ENCODE measurements at regions of chr20 and their contacts with region 1.

Region 1: DNA sequence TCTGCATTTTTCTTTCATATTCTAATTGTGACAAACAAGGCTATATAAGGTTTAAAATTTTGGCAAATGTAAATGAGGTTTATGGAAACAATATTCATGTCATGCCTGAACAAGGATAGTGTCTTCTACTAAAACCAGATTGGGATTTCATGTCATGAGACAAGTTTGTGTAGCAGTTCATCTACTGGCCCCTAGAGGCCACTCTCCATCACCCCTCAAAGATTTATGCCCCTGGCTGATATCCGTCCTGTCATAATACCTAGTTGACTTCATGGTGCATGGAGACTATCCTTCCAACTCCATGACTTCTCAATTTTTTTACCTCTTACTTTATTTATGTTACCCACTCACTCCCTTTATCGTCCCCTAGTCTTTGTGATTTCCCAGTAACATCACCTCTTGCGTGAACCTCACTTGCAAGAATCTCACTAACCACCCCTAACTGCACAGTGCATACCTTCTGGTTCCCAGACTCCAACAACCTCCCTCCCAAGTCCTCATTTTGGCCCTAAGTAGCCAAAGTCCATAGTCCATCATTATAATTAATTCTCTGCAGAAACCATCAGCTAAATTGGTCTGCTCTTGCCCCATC is 179.8 kb downstream of the TASP1 start:
- DNase-seq: peak; percentile 61
- ATAC-seq: peak; percentile 89
- H3K4me3 ChIP-seq: no peak overlapping the region
- H3K27ac ChIP-seq: no peak overlapping the region
- H3K4me1 ChIP-seq: peaks cover 19% of the 10 kb centered on the region
- H3K27me3 ChIP-seq: no peaks in the 10 kb centered on the region
- CTCF ChIP-seq: peak; percentile 76
- EP300 ChIP-seq: no peak
- POLR2A ChIP-seq: no peak
- RAD21 ChIP-seq: peak; percentile 65

Region 2: DNA sequence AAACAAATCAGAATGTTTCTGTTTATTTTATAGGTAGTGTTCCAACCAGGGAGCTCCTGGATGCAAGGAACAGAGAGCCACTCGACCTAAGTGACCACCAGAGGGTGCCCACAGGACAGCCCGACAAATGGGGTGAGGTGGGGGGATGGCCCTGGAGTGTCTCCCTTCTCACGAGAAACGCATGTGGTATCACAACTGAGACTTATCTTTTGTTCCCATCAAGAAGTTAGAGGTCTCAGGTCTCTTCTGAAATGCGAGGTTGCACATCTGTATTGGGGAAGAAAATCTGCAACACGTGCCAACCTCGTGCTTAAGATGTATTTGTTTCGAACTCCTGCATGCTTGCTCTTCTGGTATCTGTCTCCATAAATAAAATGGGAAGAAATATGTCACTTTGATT is 133.9 kb before region 1 on chr20:
- CTCF ChIA-PET with region 1: interaction called, 6 read pairs
- POLR2A ChIA-PET with region 1: no interaction called
- in situ Hi-C with region 1: no loop called
- intact Hi-C with region 1: loop called (anchors 1 kb)
- DNase-seq: peak; percentile 74
- ATAC-seq: peak; percentile 99
- H3K4me3 ChIP-seq: no peak overlapping the region
- H3K27ac ChIP-seq: no peak overlapping the region
- H3K4me1 ChIP-seq: peaks cover 29% of the 10 kb centered on the region
- H3K27me3 ChIP-seq: no peaks in the 10 kb centered on the region
- CTCF ChIP-seq: peak; percentile 98
- EP300 ChIP-seq: no peak
- POLR2A ChIP-seq: no peak
- RAD21 ChIP-seq: peak; percentile 99

Region 3: DNA sequence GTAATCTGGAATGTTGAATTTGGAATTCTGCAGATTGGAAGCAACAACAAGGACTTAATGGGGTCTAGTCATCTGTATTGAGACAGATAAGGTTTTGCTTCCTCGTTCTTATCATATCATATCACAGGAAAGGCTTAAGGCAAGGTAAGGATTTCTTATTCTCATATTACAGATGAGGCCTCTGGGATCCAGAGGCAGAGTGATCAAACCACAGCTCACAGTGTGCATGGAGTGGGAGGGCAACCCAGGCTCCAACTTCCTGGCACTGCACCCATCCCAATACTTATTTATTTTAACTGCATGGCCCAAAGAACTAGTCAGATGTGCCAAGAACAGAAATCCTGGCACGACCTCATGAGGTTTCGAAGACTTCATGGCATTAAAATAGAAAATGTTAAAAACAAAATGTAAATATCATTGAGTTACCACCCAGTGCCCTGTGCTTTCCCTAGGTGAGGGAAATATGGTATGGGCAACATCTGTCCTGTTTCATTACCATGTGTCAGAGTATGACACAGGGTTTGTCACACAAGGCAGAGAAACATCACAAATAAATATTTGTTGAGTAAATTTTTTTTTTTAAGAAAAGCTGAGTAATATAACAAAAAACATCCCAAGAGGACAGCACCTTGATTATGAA is 46.0 kb before region 1 on chr20:
- CTCF ChIA-PET with region 1: no interaction called
- POLR2A ChIA-PET with region 1: no interaction called
- in situ Hi-C with region 1: no loop called
- intact Hi-C with region 1: no loop called
- DNase-seq: no peak
- ATAC-seq: no peak
- H3K4me3 ChIP-seq: no peak overlapping the region
- H3K27ac ChIP-seq: no peak overlapping the region
- H3K4me1 ChIP-seq: peaks cover 25% of the 10 kb centered on the region
- H3K27me3 ChIP-seq: no peaks in the 10 kb centered on the region
- CTCF ChIP-seq: no peak
- EP300 ChIP-seq: no peak
- POLR2A ChIP-seq: no peak
- RAD21 ChIP-seq: no peak

Region 4: GRCh38 chr20:13425381-13426135 is 33.4 kb before region 1 on chr20:
- CTCF ChIA-PET with region 1: no interaction called
- POLR2A ChIA-PET with region 1: no interaction called
- in situ Hi-C with region 1: no loop called
- intact Hi-C with region 1: loop called (anchors 5 kb)
- DNase-seq: no peak
- ATAC-seq: no peak
- H3K4me3 ChIP-seq: no peak overlapping the region
- H3K27ac ChIP-seq: peak overlapping the region; percentile 82
- H3K4me1 ChIP-seq: peaks cover 66% of the 10 kb centered on the region
- H3K27me3 ChIP-seq: no peaks in the 10 kb centered on the region
- CTCF ChIP-seq: no peak
- EP300 ChIP-seq: no peak
- POLR2A ChIP-seq: no peak
- RAD21 ChIP-seq: no peak

Region 5: DNA sequence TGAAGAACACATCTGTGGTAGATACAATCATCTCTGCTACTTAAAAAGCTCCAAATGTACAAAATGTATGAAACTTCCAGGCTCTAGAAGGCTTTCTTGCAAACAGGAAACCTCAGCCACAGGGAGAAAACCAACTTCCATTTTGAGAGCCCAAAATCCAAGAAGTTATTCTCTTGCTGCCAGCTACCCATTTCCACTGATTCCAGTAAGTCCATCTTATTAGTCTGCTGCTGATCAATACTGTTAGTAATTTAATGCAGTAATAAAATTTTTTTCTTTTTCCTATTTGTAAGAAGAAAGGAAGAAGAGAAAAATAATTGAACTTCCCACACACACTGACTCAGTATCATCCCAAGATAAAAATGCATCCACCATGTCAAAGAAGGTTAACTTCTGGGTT is 10.3 kb after region 1 on chr20:
- CTCF ChIA-PET with region 1: no interaction called
- POLR2A ChIA-PET with region 1: no interaction called
- in situ Hi-C with region 1: no loop called
- intact Hi-C with region 1: no loop called
- DNase-seq: no peak
- ATAC-seq: no peak
- H3K4me3 ChIP-seq: no peak overlapping the region
- H3K27ac ChIP-seq: no peak overlapping the region
- H3K4me1 ChIP-seq: no peaks in the 10 kb centered on the region
- H3K27me3 ChIP-seq: no peaks in the 10 kb centered on the region; a peak in 1 of 5 replicates
- CTCF ChIP-seq: no peak
- EP300 ChIP-seq: no peak
- POLR2A ChIP-seq: no peak
- RAD21 ChIP-seq: no peak

Region 6: DNA sequence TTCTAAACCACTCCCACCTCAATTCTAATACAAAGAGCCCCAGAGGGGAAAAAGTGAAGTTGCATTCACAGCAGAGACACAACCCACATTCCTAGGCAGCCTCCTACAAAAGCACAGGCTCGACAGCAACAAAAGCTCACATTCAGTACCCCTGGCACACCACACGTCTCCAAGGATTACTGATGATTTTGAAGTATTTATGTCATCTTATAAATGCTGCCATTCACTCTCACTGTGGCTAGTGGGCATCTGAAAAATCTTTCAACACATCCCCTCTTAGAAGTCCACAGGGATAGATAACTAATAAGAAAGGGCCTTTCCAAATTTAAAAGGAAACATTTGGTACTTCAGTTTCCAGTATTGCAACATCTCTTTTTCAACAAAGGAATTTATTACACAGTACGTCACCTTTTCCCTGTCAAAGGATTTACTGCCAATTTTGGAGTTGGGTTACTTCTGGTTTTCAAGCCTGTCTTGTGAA is 33.1 kb after region 1 on chr20:
- CTCF ChIA-PET with region 1: no interaction called
- POLR2A ChIA-PET with region 1: no interaction called
- in situ Hi-C with region 1: no loop called
- intact Hi-C with region 1: no loop called
- DNase-seq: no peak
- ATAC-seq: no peak
- H3K4me3 ChIP-seq: no peak overlapping the region
- H3K27ac ChIP-seq: no peak overlapping the region
- H3K4me1 ChIP-seq: no peaks in the 10 kb centered on the region
- H3K27me3 ChIP-seq: no peaks in the 10 kb centered on the region
- CTCF ChIP-seq: no peak
- EP300 ChIP-seq: no peak
- POLR2A ChIP-seq: no peak
- RAD21 ChIP-seq: no peak

Region 7: GRCh38 chr20:13771853-13772453 is 313.0 kb after region 1 on chr20:
- CTCF ChIA-PET with region 1: no interaction called
- POLR2A ChIA-PET with region 1: no interaction called
- in situ Hi-C with region 1: no loop called
- intact Hi-C with region 1: loop called (anchors 5 kb)
- DNase-seq: peak; percentile 28
- ATAC-seq: peak; percentile 46; the same call in 1 of the 3 replicates
- H3K4me3 ChIP-seq: no peak overlapping the region
- H3K27ac ChIP-seq: no peak overlapping the region
- H3K4me1 ChIP-seq: no peaks in the 10 kb centered on the region
- H3K27me3 ChIP-seq: no peaks in the 10 kb centered on the region
- CTCF ChIP-seq: peak; percentile 41
- EP300 ChIP-seq: no peak
- POLR2A ChIP-seq: no peak
- RAD21 ChIP-seq: no peak